ENCODE measurements at regions of chr13 and their contacts with region 1.

Region 1: DNA sequence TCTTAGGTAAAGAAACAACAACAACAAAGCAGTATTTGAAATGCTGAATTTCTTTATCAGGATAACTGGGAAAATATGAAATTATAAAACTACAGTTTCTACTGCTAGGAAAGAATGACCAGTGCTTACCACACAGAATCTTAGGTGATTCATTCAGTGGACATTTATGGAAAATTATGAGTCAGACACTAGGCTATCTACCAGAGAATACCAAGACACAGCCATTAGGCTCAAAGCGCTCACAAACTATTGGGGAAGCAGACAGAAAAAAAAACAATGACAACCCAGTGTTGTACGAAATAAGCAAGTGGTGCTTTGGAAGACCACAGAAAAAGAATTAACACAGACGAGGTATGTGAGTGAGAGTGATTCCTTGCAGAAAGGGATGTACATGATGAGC is 1019.5 kb downstream of the PCDH9 start:
- DNase-seq: no peak
- H3K4me3 ChIP-seq: no peak overlapping the region
- H3K27ac ChIP-seq: peak overlapping the region; percentile 4 to 41
- H3K4me1 ChIP-seq: no peaks in the 10 kb centered on the region
- H3K27me3 ChIP-seq: no peaks in the 10 kb centered on the region
- CTCF ChIP-seq: no peak

Region 2: GRCh38 chr13:65505941-65506340 is 704.7 kb before region 1 on chr13:
- intact Hi-C with region 1: no loop called
- DNase-seq: no peak
- H3K4me3 ChIP-seq: no peak overlapping the region
- H3K27ac ChIP-seq: no peak overlapping the region
- H3K4me1 ChIP-seq: no peaks in the 10 kb centered on the region
- H3K27me3 ChIP-seq: no peaks in the 10 kb centered on the region
- CTCF ChIP-seq: no peak

Region 3: DNA sequence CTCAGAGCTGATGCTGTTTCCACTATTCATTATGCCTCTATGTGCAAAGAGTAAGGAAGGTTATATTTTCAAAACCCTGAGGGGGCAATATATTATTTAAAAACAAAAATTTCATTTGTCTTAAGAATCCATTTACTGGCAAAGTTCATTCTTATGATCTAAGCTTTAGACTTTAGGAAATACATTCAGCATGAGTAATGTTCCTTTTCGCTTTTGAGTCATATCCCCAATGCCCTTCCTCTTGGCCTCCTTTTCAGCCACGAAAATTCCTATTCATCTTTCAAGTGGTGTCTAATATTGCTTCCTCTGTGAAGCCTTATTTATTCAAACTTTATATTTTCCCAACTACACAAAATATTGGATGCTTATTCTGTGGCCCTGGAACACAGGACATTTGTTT is 297.5 kb before region 1 on chr13:
- intact Hi-C with region 1: loop called (anchors 10 kb)
- DNase-seq: no peak
- H3K4me3 ChIP-seq: no peak overlapping the region
- H3K27ac ChIP-seq: peak overlapping the region; percentile 60 to 70
- H3K4me1 ChIP-seq: peaks cover 0 to 22% of the 10 kb centered on the region in 2 donors
- H3K27me3 ChIP-seq: no peaks in the 10 kb centered on the region
- CTCF ChIP-seq: no peak

Measured in ascending aorta (tissue), 2 donors.